ENCODE measurements at regions of chr2 and their contacts with region 1.

Region 1: GRCh38 chr2:118013724-118014491 is at the start of gene CCDC93:
- DNase-seq: peak; percentile 85
- H3K4me3 Mint-ChIP-seq: peak within 1 kb of the TSS; percentile 95
- H3K27ac Mint-ChIP-seq: peak within 1 kb of the TSS; percentile 83
- H3K4me1 Mint-ChIP-seq: peaks cover 38% of the 10 kb centered on the region
- H3K27me3 Mint-ChIP-seq: no peaks in the 10 kb centered on the region
- total RNA-seq, gene CCDC93: 29.0 to 32.8 TPM

Region 2: GRCh38 chr2:118088051-118089024 is 74.4 kb after region 1 on chr2 and contains the start of gene INSIG2:
- CTCF ChIA-PET with region 1: no interaction called
- intact Hi-C with region 1: loop called (anchors 1 kb)
- DNase-seq: peak; percentile 94
- H3K4me3 Mint-ChIP-seq: peak within 1 kb of the TSS; percentile 86
- H3K27ac Mint-ChIP-seq: peak within 1 kb of the TSS; percentile 83
- H3K4me1 Mint-ChIP-seq: peaks cover 16% of the 10 kb centered on the region
- H3K27me3 Mint-ChIP-seq: no peaks in the 10 kb centered on the region
- total RNA-seq, gene INSIG2: 14.3 to 19.3 TPM

Region 3: DNA sequence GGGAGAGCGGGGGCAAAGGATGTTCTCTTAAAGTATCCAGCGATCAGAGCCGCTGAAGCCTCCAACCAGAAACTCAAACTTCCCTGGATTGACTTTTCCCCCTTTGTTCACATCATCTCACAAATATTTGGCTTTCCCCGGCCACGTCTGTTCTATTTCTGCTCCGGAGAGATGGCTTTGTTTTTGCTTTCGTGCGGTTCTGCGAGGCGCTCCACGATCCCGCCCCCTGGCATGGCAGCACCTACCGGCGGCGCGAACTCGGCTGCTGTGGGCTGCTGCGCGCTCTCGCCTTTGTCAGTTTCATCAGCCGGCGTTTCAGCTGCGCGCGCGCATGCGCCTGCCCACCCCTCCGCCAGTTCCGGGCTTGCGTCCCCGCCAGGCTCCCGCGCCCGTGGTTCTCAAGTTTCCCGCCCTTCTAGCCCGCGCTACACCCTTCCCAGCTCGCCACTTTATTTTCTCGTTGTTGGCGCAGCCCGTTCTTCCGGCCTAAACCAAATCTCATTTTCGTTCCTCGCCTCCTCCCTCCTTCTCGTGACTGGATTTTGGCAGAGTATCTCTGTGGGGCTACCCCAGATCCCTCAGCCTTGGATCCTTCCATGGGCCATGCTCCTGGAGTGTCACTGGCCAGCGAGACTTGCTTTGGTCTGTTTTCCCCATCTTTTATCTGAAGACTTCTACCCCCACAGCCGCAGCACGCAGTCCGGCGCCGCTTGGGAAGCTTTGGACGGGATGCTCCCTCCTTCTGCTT is 172.4 kb after region 1 on chr2:
- CTCF ChIA-PET with region 1: interaction called, 3 read pairs
- intact Hi-C with region 1: loop called (anchors 1 kb)
- DNase-seq: peak; percentile 90
- H3K4me3 Mint-ChIP-seq: peak overlapping the region; percentile 92
- H3K27ac Mint-ChIP-seq: peak overlapping the region; percentile 97
- H3K4me1 Mint-ChIP-seq: peaks cover 14% of the 10 kb centered on the region
- H3K27me3 Mint-ChIP-seq: no peaks in the 10 kb centered on the region

Region 4: GRCh38 chr2:118309946-118310680 is 296.2 kb after region 1 on chr2:
- CTCF ChIA-PET with region 1: no interaction called
- intact Hi-C with region 1: loop called (anchors 1 kb)
- DNase-seq: peak; percentile 69
- H3K4me3 Mint-ChIP-seq: peak overlapping the region; percentile 79
- H3K27ac Mint-ChIP-seq: peak overlapping the region; percentile 90
- H3K4me1 Mint-ChIP-seq: peaks cover 2% of the 10 kb centered on the region
- H3K27me3 Mint-ChIP-seq: no peaks in the 10 kb centered on the region

Measured in activated naive CD4-positive, alpha-beta T cell treated with anti-CD3 and anti-CD28 coated beads for 36 hours (primary cell).